HCT116 (cell line): ENCODE measurements at regions of chr10 and their contacts with region 1.

Region 1: DNA sequence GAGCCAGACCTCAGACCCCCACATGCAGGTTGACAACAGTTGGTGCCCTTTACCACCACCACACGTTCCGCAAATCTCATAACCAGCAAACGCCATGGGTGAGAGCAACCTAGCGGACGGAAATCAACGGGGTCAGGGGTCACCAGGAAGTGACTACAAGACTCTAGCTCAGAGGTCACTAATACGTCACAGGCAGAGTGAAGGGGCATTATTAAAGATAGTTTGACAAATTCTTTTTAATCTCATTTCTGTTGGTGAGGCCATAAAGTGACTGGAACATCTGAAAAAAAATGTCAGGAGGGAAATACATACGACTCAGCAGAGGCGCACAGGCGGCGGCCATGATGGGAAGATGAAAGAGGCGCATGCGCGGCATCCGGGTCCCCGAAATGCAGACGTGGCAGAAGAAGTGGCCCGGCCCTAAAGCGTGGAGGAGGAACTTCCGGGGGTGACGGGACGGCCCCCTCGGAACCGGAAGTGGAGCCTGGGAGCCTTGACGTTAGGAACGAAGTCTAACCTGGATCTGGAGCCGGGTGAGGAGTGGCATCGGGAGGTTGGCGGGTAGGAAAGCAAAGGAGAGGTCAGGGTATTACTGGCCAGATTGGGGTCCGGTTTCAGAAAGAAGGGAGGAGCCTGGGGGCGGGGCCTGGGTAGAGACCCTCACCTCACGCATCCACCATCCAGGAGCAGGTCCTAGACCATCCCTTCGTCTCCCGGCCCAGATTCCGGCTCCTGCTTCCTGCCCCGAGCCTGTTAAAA is at the start of gene SEC24C:
- DNase-seq: peak; percentile 93
- ATAC-seq: peak; percentile 89
- H3K4me3 ChIP-seq: peak within 1 kb of the TSS; percentile 84 to 98
- H3K27ac ChIP-seq: peak within 1 kb of the TSS; percentile 79
- H3K4me1 ChIP-seq: peaks cover 2 to 22% of the 10 kb centered on the region in 2 experiments; a peak in 3 of 4 replicates
- H3K27me3 ChIP-seq: no peaks in the 10 kb centered on the region
- CTCF ChIP-seq: no peak
- POLR2A ChIP-seq: peak; percentile 78
- RAD21 ChIP-seq: no peak
- total RNA-seq, gene SEC24C: 60.9 TPM

Region 2: GRCh38 chr10:73730153-73730906 is 13.8 kb before region 1 on chr10:
- CTCF ChIA-PET with region 1: no interaction called
- POLR2A ChIA-PET with region 1: interaction called, 36 read pairs
- RAD21 ChIA-PET with region 1: no interaction called
- intact Hi-C with region 1: no loop called
- DNase-seq: peak; percentile 87
- ATAC-seq: peak; percentile 87
- H3K4me3 ChIP-seq: peak overlapping the region; percentile 57 to 95
- H3K27ac ChIP-seq: peak overlapping the region; percentile 87
- H3K4me1 ChIP-seq: peaks cover 0 to 6% of the 10 kb centered on the region in 2 experiments; a peak in 2 of 4 replicates
- H3K27me3 ChIP-seq: no peaks in the 10 kb centered on the region
- CTCF ChIP-seq: no peak
- POLR2A ChIP-seq: peak; percentile 86
- RAD21 ChIP-seq: 0 out of 2 replicates have a peak, but pooled peaks have one; percentile 25

Region 3: GRCh38 chr10:74598891-74599566 is 854.9 kb after region 1 on chr10:
- CTCF ChIA-PET with region 1: no interaction called
- POLR2A ChIA-PET with region 1: no interaction called
- RAD21 ChIA-PET with region 1: no interaction called
- intact Hi-C with region 1: no loop called
- DNase-seq: no peak
- ATAC-seq: no peak
- H3K4me3 ChIP-seq: no peak overlapping the region
- H3K27ac ChIP-seq: no peak overlapping the region
- H3K4me1 ChIP-seq: no peaks in the 10 kb centered on the region
- H3K27me3 ChIP-seq: no peaks in the 10 kb centered on the region
- CTCF ChIP-seq: no peak
- POLR2A ChIP-seq: no peak
- RAD21 ChIP-seq: no peak